Naive thymus-derived CD4-positive, alpha-beta T cell (primary cell): ENCODE measurements at regions of chr12 and their contacts with region 1.

Region 1: DNA sequence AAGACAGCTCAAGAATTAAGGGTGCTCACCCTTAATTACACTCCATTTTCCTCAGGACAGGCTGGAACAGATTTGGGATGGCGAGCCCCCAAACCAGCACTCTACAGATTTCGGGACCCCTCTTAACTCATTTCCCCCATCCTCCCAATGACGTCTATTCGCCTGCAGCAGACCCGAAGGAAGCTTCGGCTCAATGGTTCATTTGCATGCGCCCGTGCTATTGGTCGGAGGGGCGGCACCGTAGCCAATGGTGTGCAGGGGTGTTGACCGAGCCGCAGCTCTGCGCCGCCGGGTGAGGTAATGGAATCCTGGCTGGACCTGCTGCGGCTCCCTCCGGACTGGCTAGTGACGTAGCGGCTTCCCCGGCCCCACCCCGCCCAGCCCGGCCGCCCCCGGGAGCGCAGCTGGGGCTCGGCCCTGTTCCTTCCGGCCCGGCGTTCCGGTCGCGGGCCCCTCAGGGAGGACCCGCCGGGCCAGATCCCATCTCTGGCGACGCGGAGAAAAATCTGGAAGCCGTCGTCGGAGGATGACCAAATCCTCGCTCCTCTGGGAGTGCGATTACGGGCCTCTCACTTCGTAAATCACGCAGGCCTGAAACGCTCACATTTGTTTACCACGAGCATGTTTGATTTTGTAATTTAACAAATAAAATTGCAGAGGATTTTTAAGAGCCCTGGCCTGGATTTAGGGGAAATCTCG is 18.3 kb upstream of the NR4A1 start:
- DNase-seq: peak; percentile 68 to 93 (median 80)
- ATAC-seq: peak; percentile 90
- H3K4me3 ChIP-seq: peak overlapping the region; percentile 24
- H3K4me3 Mint-ChIP-seq: peak overlapping the region; percentile 72 to 89 (median 82)
- H3K27ac ChIP-seq: peak overlapping the region; percentile 77
- H3K27ac Mint-ChIP-seq: peak overlapping the region; percentile 36 to 97 (median 95)
- H3K4me1 ChIP-seq: peaks cover 18 to 20% of the 10 kb centered on the region in 2 donors
- H3K4me1 Mint-ChIP-seq: peaks cover 13 to 40% (median 29%) of the 10 kb centered on the region in 7 donors
- H3K27me3 ChIP-seq: no peaks in the 10 kb centered on the region
- H3K27me3 Mint-ChIP-seq: peaks cover 0 to 28% (median 0%) of the 10 kb centered on the region in 5 donors

Region 2: DNA sequence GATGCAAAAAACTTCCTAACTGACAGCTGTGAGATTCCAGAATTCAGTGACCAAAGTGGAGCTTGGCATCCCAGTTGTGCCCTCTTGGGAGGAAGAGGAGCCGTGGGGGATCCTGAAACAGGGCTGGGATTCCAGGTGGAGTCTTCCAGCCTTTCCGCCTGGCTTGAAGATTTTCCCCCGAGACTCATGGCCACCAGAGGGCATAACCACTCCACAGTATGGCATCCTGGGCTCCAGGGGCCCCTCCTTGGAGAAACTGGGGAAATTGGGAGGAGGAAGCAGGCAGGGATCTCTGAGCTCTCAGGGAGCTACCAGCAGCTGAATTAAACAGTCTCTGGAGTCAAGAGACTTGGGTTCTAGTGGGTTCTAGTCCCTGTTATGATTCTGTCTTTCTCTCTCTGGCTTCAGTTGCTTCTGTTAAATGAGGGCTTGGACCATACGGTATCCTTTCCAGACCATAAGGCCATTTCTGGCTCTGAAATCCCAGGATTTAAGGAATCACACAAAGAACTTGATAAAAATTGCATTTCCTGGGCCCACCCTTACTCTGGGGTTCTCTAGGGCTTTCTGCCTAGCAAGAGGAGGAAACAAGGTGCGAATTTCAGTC is 28.8 kb before region 1 on chr12:
- CTCF ChIA-PET with region 1: interaction called, 319 read pairs
- POLR2A ChIA-PET with region 1: interaction called, 4 read pairs
- intact Hi-C with region 1: no loop called
- DNase-seq: no peak
- ATAC-seq: no peak
- H3K4me3 ChIP-seq: no peak overlapping the region
- H3K4me3 Mint-ChIP-seq: no peak overlapping the region
- H3K27ac ChIP-seq: no peak overlapping the region
- H3K27ac Mint-ChIP-seq: peak overlapping the region in 2 of 9 donors; percentile 24 to 67
- H3K4me1 ChIP-seq: peaks cover 0 to 11% of the 10 kb centered on the region in 2 donors
- H3K4me1 Mint-ChIP-seq: peaks cover 6 to 27% (median 19%) of the 10 kb centered on the region in 7 donors
- H3K27me3 ChIP-seq: no peaks in the 10 kb centered on the region
- H3K27me3 Mint-ChIP-seq: peaks cover 0 to 45% (median 0%) of the 10 kb centered on the region in 5 donors

Region 3: GRCh38 chr12:52069327-52070184 is 36.6 kb after region 1 on chr12 and contains the start of gene ATG101:
- CTCF ChIA-PET with region 1: interaction called, 457 read pairs
- POLR2A ChIA-PET with region 1: interaction called, 12 read pairs
- intact Hi-C with region 1: loop called (anchors 1 kb)
- DNase-seq: peak; percentile 80 to 92 (median 89)
- ATAC-seq: peak; percentile 97
- H3K4me3 ChIP-seq: peak within 1 kb of the TSS; percentile 96
- H3K4me3 Mint-ChIP-seq: peak within 1 kb of the TSS; percentile 88 to 99 (median 96)
- H3K27ac ChIP-seq: peak within 1 kb of the TSS; percentile 87
- H3K27ac Mint-ChIP-seq: peak within 1 kb of the TSS; percentile 97 to 100 (median 98)
- H3K4me1 ChIP-seq: peaks cover 19 to 31% of the 10 kb centered on the region in 2 donors
- H3K4me1 Mint-ChIP-seq: peaks cover 35 to 59% (median 49%) of the 10 kb centered on the region in 7 donors
- H3K27me3 ChIP-seq: no peaks in the 10 kb centered on the region
- H3K27me3 Mint-ChIP-seq: peaks cover 0 to 5% (median 0%) of the 10 kb centered on the region in 5 donors
- total RNA-seq, gene ATG101: 20.7 to 39.7 (median 34.3) TPM